H1 (cell line): ENCODE measurements at regions of chr11 and their contacts with region 1.

Region 1: DNA sequence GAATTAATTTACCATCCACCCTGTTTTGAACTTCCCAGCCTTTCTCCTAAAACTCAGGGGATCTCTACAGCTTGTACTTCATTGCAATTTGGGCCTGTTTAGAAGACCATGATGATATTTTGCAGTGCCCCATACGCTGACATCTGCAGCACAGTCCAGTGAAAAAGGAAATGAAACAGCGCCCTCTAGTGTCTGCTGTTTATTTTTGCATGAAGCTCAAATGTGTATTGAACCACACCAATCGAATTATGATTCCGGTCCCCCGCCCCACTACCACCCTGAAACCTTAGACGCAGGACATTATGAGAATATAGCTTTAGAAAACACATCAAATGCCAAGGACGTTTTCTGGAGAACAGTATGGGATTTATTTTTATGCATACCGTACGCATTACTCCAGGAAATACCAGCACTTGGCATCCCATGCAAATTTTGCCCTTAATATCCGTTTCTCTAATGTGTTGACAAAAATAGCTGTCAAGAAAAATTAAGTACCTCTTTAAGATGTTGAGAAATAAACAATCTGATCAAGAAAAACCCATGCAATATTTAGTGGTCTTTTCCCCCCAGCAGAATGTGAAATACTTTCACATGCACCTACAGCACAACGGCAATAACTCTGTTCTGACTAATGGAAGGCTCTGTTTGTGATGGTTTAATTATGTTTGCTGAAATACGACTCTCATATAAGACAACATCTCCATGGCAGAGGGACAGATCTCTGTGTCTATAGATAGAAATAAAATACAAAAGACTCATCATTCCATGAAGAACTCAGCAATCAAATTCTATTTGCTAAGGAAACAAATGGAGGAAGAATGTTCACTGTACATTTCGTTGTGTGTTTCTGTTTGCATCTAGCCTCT is 93.9 kb downstream of the TECTA start:
- DNase-seq: peak in 1 of 2 experiments; percentile 64
- H3K4me3 ChIP-seq: no peak overlapping the region
- H3K27ac ChIP-seq: no peak overlapping the region
- H3K4me1 ChIP-seq: peaks cover 0 to 7% (median 3%) of the 10 kb centered on the region in 4 experiments; a peak in 4 of 7 replicates
- H3K27me3 ChIP-seq: no peaks in the 10 kb centered on the region
- CTCF ChIP-seq: peak in 2 of 3 experiments; percentile 70 to 73; a peak in 3 of 4 replicates
- EP300 ChIP-seq: no peak
- POLR2A ChIP-seq: no peak
- RAD21 ChIP-seq: peak; percentile 85 to 87

Region 2: GRCh38 chr11:120945042-120945441 is 249.9 kb before region 1 on chr11:
- CTCF ChIA-PET with region 1: interaction called, 10 read pairs
- POLR2A ChIA-PET with region 1: no interaction called
- DNase-seq: no peak
- H3K4me3 ChIP-seq: no peak overlapping the region
- H3K27ac ChIP-seq: no peak overlapping the region
- H3K4me1 ChIP-seq: no peaks in the 10 kb centered on the region
- H3K27me3 ChIP-seq: no peaks in the 10 kb centered on the region
- CTCF ChIP-seq: peak; percentile 49 to 71 (median 50)
- EP300 ChIP-seq: no peak
- POLR2A ChIP-seq: no peak
- RAD21 ChIP-seq: peak; percentile 59 to 63; a peak in 3 of 4 replicates

Region 3: DNA sequence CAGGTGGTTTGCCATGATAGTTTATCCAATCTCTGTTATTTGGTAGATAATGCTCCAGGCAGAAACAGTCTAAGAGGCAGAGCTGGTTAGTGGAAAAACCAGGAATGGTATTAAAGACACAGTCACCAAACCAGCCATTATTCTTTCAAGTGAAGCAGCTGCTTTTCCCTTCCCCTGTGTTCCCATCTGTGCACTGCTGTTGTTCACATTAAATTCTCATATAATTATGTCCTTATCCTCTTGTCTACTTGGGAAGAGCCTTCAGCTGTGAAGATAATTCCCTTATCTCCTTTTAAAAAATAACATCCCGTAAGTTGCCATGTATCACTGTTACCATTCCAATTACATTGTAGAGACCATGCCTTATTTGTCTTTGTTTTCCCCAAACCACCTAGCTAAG is 176.2 kb before region 1 on chr11:
- CTCF ChIA-PET with region 1: no interaction called
- POLR2A ChIA-PET with region 1: no interaction called
- DNase-seq: no peak
- H3K4me3 ChIP-seq: no peak overlapping the region
- H3K27ac ChIP-seq: no peak overlapping the region
- H3K4me1 ChIP-seq: peaks cover 0 to 3% (median 1%) of the 10 kb centered on the region in 4 experiments; a peak in 1 of 7 replicates
- H3K27me3 ChIP-seq: no peaks in the 10 kb centered on the region
- CTCF ChIP-seq: no peak
- EP300 ChIP-seq: no peak
- POLR2A ChIP-seq: no peak
- RAD21 ChIP-seq: no peak

Region 4: GRCh38 chr11:121104312-121104762 is 90.6 kb before region 1 on chr11:
- CTCF ChIA-PET with region 1: interaction called, 14 read pairs
- POLR2A ChIA-PET with region 1: no interaction called
- DNase-seq: peak in 1 of 2 experiments; percentile 67
- H3K4me3 ChIP-seq: no peak overlapping the region
- H3K27ac ChIP-seq: no peak overlapping the region
- H3K4me1 ChIP-seq: peaks cover 0 to 3% (median 1%) of the 10 kb centered on the region in 4 experiments; a peak in 3 of 7 replicates
- H3K27me3 ChIP-seq: no peaks in the 10 kb centered on the region
- CTCF ChIP-seq: peak; percentile 76 to 94 (median 81)
- EP300 ChIP-seq: no peak
- POLR2A ChIP-seq: no peak
- RAD21 ChIP-seq: peak; percentile 27 to 59

Region 5: DNA sequence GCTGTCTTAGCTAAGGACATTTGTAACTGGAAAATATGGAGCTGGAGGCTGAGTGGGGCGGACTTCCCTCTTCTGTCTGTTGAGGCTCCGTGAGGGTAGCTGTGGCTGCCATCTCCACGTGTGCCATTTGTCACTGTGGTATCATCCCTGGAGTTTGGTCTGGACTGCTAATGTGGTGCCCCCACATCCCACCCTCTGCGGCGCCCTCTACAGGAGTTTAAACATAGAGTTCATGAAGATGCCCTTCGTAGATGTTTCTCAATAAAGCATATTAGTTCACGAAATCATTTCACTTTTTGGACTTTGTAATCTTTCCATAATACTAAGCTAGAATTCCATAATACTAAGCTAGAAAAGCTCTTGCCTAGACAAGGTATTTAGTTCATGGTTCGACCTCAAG is 41.5 kb before region 1 on chr11:
- CTCF ChIA-PET with region 1: interaction called, 42 read pairs
- POLR2A ChIA-PET with region 1: no interaction called
- DNase-seq: no peak
- H3K4me3 ChIP-seq: no peak overlapping the region
- H3K27ac ChIP-seq: no peak overlapping the region
- H3K4me1 ChIP-seq: no peaks in the 10 kb centered on the region; a peak in 1 of 7 replicates
- H3K27me3 ChIP-seq: no peaks in the 10 kb centered on the region; a peak in 1 of 7 replicates
- CTCF ChIP-seq: peak; percentile 52 to 67 (median 52)
- EP300 ChIP-seq: no peak
- POLR2A ChIP-seq: no peak
- RAD21 ChIP-seq: peak; percentile 28 to 52; a peak in 3 of 4 replicates

Region 6: GRCh38 chr11:121179306-121179705 is 15.7 kb before region 1 on chr11:
- CTCF ChIA-PET with region 1: interaction called, 12 read pairs
- POLR2A ChIA-PET with region 1: interaction called, 3 read pairs
- DNase-seq: no peak
- H3K4me3 ChIP-seq: no peak overlapping the region
- H3K27ac ChIP-seq: no peak overlapping the region
- H3K4me1 ChIP-seq: no peaks in the 10 kb centered on the region
- H3K27me3 ChIP-seq: no peaks in the 10 kb centered on the region
- CTCF ChIP-seq: no peak
- EP300 ChIP-seq: no peak
- POLR2A ChIP-seq: no peak
- RAD21 ChIP-seq: no peak

Region 7: GRCh38 chr11:121344824-121345223 is 149.9 kb after region 1 on chr11:
- CTCF ChIA-PET with region 1: no interaction called
- POLR2A ChIA-PET with region 1: no interaction called
- DNase-seq: no peak
- H3K4me3 ChIP-seq: no peak overlapping the region
- H3K27ac ChIP-seq: no peak overlapping the region
- H3K4me1 ChIP-seq: no peaks in the 10 kb centered on the region
- H3K27me3 ChIP-seq: no peaks in the 10 kb centered on the region
- CTCF ChIP-seq: no peak
- EP300 ChIP-seq: no peak
- POLR2A ChIP-seq: no peak
- RAD21 ChIP-seq: no peak